ENCODE measurements at regions of chr5 and their contacts with region 1.

Region 1: GRCh38 chr5:180291943-180292831 is at the start of gene MAPK9:
- DNase-seq: peak; percentile 69 to 76
- ATAC-seq: peak; percentile 86 to 88
- H3K4me3 ChIP-seq: peak within 1 kb of the TSS; percentile 69 to 99 (median 92)
- H3K27ac ChIP-seq: peak within 1 kb of the TSS; percentile 81 to 97 (median 94)
- H3K4me1 ChIP-seq: peaks cover 15% of the 10 kb centered on the region in 2 donors
- H3K27me3 ChIP-seq: no peaks in the 10 kb centered on the region
- CTCF ChIP-seq: no peak
- POLR2A ChIP-seq: peak; percentile 39 to 57
- total RNA-seq, gene MAPK9: 18.3 to 27.0 (median 23.9) TPM

Region 2: GRCh38 chr5:179060116-179061008 is 1231.8 kb before region 1 on chr5 and contains the start of gene ZNF354C:
- in situ Hi-C with region 1: no loop called
- intact Hi-C with region 1: loop called (anchors 2 kb)
- DNase-seq: peak; percentile 74 to 77
- ATAC-seq: peak; percentile 90 to 95
- H3K4me3 ChIP-seq: peak within 1 kb of the TSS; percentile 71 to 91 (median 84)
- H3K27ac ChIP-seq: peak within 1 kb of the TSS; percentile 63 to 76 (median 74)
- H3K4me1 ChIP-seq: peaks cover 5 to 7% of the 10 kb centered on the region in 2 donors
- H3K27me3 ChIP-seq: peaks cover 0 to 4% (median 0%) of the 10 kb centered on the region in 3 donors
- CTCF ChIP-seq: peak in 1 of 5 experiments; percentile 15
- POLR2A ChIP-seq: peak in 1 of 2 donors; percentile 48
- total RNA-seq, gene ZNF354C: 1.6 to 3.5 (median 2.3) TPM

Region 3: DNA sequence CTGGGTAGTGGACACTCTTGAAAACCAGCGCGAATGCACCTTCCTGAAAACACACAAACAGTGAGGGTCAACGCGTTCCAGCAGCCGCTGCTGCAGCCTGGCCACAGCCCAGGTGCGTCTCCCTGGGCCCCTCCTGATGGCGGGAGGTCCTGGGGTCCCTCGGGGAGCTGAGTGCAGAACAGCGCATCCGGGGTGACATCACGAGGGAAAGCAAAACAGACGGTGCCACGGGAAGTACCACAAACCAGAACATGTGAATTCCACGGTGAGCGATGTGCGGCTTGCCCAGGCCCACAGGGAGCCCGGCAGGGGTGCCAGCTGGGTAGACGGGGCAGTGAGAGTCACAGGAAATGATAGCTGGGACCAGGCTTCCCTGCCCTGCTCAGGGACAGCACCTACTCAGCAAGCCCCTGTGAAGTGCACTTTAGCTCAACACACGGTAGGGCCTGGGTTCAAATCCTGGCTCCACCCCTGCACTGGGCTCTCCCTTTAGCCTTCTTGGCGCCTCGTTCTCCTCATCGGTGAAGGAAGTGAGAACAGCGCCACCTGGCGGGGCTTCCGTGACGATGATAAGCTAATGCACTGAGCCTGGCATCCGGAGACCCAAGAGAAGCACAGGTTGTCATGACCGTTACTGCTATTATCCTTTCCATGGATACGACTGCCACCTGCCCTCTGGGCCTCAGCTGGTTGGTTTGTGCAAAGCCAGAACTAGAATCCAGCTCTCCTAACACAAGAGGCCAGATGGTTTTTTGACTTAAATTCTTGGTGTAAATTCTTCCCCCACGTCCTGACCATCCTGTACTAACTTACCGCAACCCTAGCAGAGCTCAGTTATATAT is 36.3 kb after region 1 on chr5:
- in situ Hi-C with region 1: no loop called
- intact Hi-C with region 1: loop called (anchors 1 kb)
- DNase-seq: peak; percentile 45 to 67
- ATAC-seq: peak in 1 of 2 donors; percentile 70
- H3K4me3 ChIP-seq: no peak overlapping the region
- H3K27ac ChIP-seq: no peak overlapping the region
- H3K4me1 ChIP-seq: no peaks in the 10 kb centered on the region
- H3K27me3 ChIP-seq: no peaks in the 10 kb centered on the region
- CTCF ChIP-seq: peak; percentile 31 to 74 (median 64)
- POLR2A ChIP-seq: no peak

Region 4: GRCh38 chr5:180353048-180353979 is 61.1 kb after region 1 on chr5 and contains the start of gene GFPT2:
- in situ Hi-C with region 1: no loop called
- intact Hi-C with region 1: loop called (anchors 2 kb)
- DNase-seq: peak; percentile 49 to 58
- ATAC-seq: peak; percentile 72 to 76
- H3K4me3 ChIP-seq: peak within 1 kb of the TSS; percentile 56 to 73 (median 66)
- H3K27ac ChIP-seq: peak within 1 kb of the TSS; percentile 42 to 71 (median 58)
- H3K4me1 ChIP-seq: peaks cover 5 to 9% of the 10 kb centered on the region in 2 donors
- H3K27me3 ChIP-seq: peaks cover 32 to 39% (median 37%) of the 10 kb centered on the region in 3 donors
- CTCF ChIP-seq: no peak
- POLR2A ChIP-seq: peak; percentile 19 to 67
- total RNA-seq, gene GFPT2: 2.1 to 5.5 (median 4.1) TPM

Region 5: DNA sequence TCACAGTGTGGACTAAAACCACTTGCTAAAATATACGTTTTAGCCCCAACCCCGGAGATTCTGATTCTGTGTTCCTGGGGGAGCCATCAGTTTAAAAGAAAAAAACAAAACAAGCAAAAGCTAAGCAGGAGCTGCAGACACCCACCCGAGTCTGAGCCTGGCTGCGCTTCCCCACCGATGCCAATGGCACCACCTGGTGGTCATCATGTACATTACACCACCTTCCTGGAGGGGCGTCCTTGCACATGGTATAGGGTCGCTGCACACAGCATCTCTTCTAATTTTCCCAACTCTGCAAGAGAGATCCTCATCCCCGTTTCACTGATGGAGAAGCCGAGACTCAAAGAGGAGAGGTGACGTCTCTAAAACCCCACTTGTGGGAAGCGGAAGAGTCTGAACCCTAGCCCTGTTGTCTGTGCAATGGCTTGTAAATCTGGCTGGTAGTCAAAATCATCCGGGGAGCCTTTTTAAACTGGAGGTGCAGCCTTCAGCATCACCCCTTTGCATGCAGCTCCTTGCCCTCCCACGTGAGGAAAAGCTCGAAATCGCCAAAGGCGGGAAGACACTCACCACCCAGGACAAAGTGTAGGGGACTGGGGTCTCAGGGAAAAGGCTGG is 178.9 kb after region 1 on chr5:
- in situ Hi-C with region 1: loop called in 3 of 4 experiments (anchors 5 to 10 kb)
- intact Hi-C with region 1: loop called (anchors 1 kb)
- DNase-seq: peak; percentile 20 to 22
- ATAC-seq: peak; percentile 41 to 51
- H3K4me3 ChIP-seq: no peak overlapping the region
- H3K27ac ChIP-seq: no peak overlapping the region
- H3K4me1 ChIP-seq: no peaks in the 10 kb centered on the region
- H3K27me3 ChIP-seq: no peaks in the 10 kb centered on the region
- CTCF ChIP-seq: peak; percentile 64 to 90 (median 81)
- POLR2A ChIP-seq: no peak

Region 6: DNA sequence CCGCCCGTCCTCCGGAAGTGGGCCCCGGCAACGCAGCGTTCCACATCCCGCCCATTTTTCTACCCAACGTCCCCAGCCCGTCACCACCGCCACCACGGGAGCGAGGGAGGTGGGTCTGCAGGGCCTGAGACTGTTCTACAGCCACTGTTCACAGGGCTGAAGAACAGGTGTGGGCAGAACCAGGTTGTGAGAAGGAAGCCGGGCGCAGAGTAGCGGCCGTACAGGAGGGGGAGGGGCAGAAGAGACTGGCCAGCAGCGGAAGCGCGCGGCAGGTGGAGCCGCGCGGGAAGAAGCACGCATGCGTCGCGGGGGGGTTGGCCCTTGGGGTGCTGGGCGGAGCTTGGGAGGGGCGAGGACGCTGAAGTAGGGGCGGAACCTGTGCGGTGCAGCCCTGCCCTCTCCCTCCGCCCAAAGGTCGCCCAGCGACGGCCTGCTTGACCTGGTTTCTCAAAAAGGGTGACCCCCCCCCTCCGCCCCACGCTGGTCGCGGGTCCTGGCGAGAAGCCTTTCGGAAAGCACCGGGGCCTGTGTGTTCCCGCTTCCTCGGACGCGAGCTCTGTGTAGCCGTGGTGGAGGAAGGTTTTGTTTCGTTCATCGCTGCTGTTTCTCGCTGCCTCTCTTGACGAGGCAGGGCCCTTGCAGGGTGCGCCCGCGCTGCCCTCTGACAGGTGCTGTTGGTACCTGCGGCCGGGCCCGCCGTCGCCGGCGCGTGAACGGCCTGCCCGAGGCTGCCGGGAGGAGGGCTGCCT is 518.2 kb after region 1 on chr5:
- in situ Hi-C with region 1: no loop called
- intact Hi-C with region 1: loop called (anchors 5 kb)
- DNase-seq: peak; percentile 96
- ATAC-seq: peak; percentile 83 to 86
- H3K4me3 ChIP-seq: peak overlapping the region; percentile 74 to 94 (median 79)
- H3K27ac ChIP-seq: peak overlapping the region; percentile 94 to 100 (median 100)
- H3K4me1 ChIP-seq: peaks cover 48 to 52% of the 10 kb centered on the region in 2 donors
- H3K27me3 ChIP-seq: no peaks in the 10 kb centered on the region
- CTCF ChIP-seq: no peak
- POLR2A ChIP-seq: peak; percentile 75 to 85